GM23248 (cell line): ENCODE measurements at regions of chr4 and their contacts with region 1.

Region 1: DNA sequence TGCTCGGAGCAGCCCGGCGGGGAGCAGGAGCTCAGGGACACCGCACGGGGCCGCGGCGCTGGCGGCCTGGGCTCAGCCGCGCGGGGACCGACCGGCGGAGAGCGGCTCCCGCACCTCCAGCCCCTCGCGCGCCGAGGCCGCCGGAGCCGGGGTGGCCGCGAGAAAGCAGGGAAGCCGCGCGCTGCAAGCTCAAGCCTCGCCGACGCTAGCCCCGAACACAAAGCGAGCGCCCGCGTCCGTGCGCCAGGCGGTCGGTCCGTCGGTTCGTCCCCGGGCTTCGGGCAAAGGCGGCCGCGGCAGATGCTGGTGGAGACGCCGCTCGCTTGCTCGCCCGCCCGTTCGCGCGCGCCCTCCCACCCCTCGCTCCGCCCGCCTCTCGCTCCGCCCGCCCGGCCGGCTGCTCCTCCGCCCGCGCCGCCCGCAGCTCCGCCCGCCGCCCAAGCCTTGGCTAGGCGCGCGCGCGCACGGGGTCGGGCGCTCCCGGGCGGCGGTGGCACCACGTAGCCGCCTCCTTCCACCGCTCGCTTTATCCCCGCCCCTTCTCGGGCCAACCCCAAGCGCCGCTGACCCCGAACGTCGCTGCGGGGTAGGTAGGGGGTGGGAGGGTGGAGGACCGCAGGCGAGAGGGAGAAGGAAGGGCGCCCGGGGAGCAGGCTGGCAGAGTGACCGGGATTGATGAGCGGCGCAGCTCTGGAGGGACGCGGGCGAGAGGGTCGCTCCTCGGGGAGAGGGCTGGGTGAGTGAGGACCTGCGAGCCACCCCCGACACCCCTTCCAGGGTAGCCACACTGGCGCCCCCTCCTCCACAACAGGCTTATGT is at the start of gene TSPAN5:
- DNase-seq: peak; percentile 94
- H3K4me3 ChIP-seq: peak within 1 kb of the TSS; percentile 99
- H3K27ac ChIP-seq: peak within 1 kb of the TSS; percentile 64
- H3K4me1 ChIP-seq: peaks cover 48% of the 10 kb centered on the region
- H3K27me3 ChIP-seq: no peaks in the 10 kb centered on the region
- total RNA-seq, gene TSPAN5: 61.9 and 69.6 TPM in 2 replicates

Region 2: GRCh38 chr4:98467627-98468072 is 190.8 kb before region 1 on chr4:
- in situ Hi-C with region 1: loop called (anchors 25 kb)
- DNase-seq: peak; percentile 97
- H3K4me3 ChIP-seq: peak overlapping the region; percentile 72
- H3K27ac ChIP-seq: peak overlapping the region; percentile 82
- H3K4me1 ChIP-seq: peaks cover 21% of the 10 kb centered on the region
- H3K27me3 ChIP-seq: no peaks in the 10 kb centered on the region